ENCODE measurements at regions of chr17 and their contacts with region 1.

Region 1: DNA sequence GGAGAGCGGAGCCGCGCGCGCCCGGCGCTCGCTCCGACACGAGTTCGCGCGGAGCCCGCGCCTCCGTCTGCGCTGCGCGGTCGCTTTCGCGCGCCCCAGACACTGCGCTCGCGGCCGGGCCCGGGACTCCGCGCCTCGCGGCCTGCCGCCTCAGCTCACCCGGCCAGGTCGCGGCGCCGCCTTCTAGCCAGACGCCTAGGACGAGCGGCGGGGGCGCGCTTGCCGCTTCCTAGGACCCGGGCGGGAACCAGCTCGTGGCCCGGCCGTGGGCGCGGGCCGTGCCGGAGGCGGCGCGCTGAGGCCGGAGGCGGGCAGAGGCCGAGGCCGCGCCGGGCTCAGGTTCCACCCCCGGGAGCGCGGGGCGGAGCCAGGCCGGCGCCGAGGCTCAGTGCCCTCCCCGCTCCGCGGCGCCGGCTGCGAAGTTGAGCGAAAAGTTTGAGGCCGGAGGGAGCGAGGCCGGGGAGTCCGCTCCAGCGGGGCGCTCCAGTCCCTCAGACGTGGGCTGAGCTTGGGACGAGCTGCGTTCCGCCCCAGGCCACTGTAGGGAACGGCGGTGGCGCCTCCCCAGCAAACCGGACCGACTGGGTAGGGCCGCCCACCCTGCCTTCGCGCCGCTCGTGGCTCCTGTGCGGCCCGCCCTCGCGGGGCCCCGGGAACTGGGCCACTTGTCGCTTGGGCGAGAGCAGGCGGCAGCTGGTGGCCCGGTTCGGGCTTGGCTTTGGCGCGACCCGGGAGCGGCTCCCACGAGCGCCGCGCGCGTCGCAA is at the start of gene SPHK1:
- DNase-seq: peak; percentile 79
- ATAC-seq: peak; percentile 74
- H3K4me3 Mint-ChIP-seq: peak within 1 kb of the TSS; percentile 81
- H3K27ac Mint-ChIP-seq: peak within 1 kb of the TSS; percentile 89
- H3K4me1 Mint-ChIP-seq: peaks cover 17% of the 10 kb centered on the region
- H3K27me3 Mint-ChIP-seq: no peaks in the 10 kb centered on the region
- total RNA-seq, gene SPHK1: 5.4 to 8.4 TPM

Region 2: GRCh38 chr17:76171706-76172105 is 212.7 kb before region 1 on chr17:
- CTCF ChIA-PET with region 1: no interaction called
- DNase-seq: no peak
- ATAC-seq: no peak
- H3K4me3 Mint-ChIP-seq: no peak overlapping the region
- H3K27ac Mint-ChIP-seq: no peak overlapping the region
- H3K4me1 Mint-ChIP-seq: peaks cover 4% of the 10 kb centered on the region
- H3K27me3 Mint-ChIP-seq: no peaks in the 10 kb centered on the region

Region 3: DNA sequence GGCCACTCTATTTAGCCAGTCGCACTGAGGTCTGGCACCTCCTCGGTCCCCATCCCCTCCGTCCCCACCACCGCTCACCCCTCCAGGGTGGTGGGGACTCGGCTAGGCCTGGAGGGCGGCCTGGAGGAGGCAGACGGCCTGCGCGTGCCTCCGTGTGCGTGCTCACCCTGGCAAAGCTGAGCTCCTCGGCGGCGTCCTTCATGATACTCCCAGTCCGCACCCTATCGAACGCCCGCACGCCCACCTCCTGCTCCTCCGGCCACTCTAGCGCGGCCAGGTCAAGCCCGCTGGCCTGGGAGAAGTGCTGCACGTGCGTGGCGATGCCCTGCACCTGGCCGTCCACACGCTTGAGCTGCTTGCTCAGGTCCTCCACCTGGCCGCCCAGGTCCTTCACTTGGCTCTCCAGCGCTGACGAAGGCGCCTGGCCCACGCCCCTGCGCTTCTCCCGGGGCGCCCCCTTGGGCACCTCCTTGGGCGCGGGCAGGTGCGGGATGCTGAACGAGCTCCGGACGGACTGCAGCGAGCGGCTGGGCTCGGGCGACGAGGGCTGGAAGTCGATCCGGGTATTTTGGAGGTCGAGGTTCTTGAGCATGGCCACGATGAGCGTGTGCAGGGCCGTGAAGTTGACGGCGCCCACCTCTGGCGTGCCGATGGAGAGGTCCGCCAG is 77.0 kb before region 1 on chr17:
- CTCF ChIA-PET with region 1: interaction called, 81 read pairs
- DNase-seq: no peak
- ATAC-seq: no peak
- H3K4me3 Mint-ChIP-seq: no peak overlapping the region
- H3K27ac Mint-ChIP-seq: no peak overlapping the region
- H3K4me1 Mint-ChIP-seq: peaks cover 2% of the 10 kb centered on the region
- H3K27me3 Mint-ChIP-seq: no peaks in the 10 kb centered on the region

Region 4: DNA sequence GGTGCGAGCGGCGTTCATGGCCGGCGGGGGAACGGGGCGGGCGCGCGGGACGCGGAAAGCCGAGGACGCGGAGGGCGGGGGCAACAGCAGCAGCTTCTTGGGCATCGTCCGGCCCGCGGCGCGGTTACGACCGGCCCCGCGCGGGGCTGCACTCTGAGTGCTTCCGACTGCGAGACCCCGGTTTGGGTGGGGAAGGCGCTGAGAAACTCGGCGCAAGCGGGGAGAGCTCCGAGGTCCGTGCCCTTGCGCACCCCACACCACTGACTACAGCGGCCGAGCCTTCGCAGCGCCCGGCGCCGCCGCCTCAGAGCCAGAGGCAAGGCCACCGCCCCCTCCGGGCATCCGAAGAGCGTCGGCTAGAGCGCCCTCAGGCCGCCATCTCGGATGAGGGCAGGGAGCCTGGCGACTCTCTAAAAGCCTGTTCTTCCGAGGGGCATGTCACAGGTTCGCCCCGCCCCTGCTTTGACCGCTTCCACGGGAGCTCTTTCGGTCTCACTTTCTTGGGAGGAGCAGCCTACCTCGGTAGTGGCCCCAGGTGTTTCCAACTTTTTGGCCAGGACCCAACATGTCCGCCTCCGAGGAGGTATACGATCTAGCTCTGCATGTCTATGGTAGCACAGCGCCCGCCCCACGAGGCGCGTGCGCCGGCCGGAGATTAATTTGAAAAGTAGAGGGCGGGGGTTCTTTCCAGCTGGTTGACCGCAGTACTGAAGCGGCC is 30.6 kb before region 1 on chr17 and contains the start of gene PRPSAP1:
- CTCF ChIA-PET with region 1: interaction called, 83 read pairs
- DNase-seq: peak; percentile 90
- ATAC-seq: peak; percentile 95
- H3K4me3 Mint-ChIP-seq: peak within 1 kb of the TSS; percentile 98
- H3K27ac Mint-ChIP-seq: peak within 1 kb of the TSS; percentile 99
- H3K4me1 Mint-ChIP-seq: peaks cover 34% of the 10 kb centered on the region
- H3K27me3 Mint-ChIP-seq: no peaks in the 10 kb centered on the region
- total RNA-seq, gene PRPSAP1: 63.9 to 64.7 TPM

Region 5: DNA sequence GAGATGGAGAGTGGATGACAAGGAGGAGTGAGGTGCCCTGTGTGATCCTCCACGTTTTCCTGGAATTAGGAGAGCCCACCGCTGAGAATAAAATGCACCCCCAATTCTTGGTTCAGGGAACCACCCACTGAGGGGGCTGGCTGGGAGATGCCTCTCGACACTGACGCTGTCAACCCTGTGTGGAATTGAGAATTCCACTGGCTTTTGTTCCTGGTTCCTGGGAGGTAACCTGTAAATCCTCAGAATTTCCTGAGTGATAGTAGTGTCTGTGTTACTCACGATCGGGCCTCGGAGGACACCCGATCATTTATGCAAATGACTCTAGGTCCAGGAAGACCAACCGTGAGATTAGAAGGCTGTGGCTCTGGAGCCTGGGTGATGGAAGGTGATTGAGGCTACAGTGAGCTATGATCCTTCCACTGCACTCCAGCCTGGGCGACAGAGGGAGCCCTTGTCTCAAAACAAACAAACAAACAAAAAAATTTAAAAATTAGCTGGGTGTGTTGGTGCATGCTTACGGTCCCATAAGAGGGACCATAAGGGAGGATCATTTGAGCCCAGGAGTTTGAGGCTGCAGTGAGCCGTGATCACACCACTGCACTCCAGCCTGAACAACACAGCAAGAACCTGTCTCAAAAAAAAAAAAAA is 19.0 kb before region 1 on chr17:
- CTCF ChIA-PET with region 1: interaction called, 45 read pairs
- DNase-seq: no peak
- ATAC-seq: no peak
- H3K4me3 Mint-ChIP-seq: no peak overlapping the region
- H3K27ac Mint-ChIP-seq: no peak overlapping the region
- H3K4me1 Mint-ChIP-seq: no peaks in the 10 kb centered on the region
- H3K27me3 Mint-ChIP-seq: no peaks in the 10 kb centered on the region

Region 6: GRCh38 chr17:76370261-76370993 is 14.0 kb before region 1 on chr17:
- CTCF ChIA-PET with region 1: interaction called, 45 read pairs
- DNase-seq: no peak
- ATAC-seq: no peak
- H3K4me3 Mint-ChIP-seq: no peak overlapping the region
- H3K27ac Mint-ChIP-seq: no peak overlapping the region
- H3K4me1 Mint-ChIP-seq: no peaks in the 10 kb centered on the region
- H3K27me3 Mint-ChIP-seq: no peaks in the 10 kb centered on the region

Region 7: GRCh38 chr17:76408052-76408849 is 23.8 kb after region 1 on chr17:
- CTCF ChIA-PET with region 1: interaction called, 26 read pairs
- DNase-seq: peak; percentile 80
- ATAC-seq: peak; percentile 81
- H3K4me3 Mint-ChIP-seq: no peak overlapping the region
- H3K27ac Mint-ChIP-seq: no peak overlapping the region
- H3K4me1 Mint-ChIP-seq: peaks cover 4% of the 10 kb centered on the region
- H3K27me3 Mint-ChIP-seq: no peaks in the 10 kb centered on the region

Region 8: GRCh38 chr17:76452660-76453430 is 68.4 kb after region 1 on chr17 and contains the start of gene UBE2O:
- CTCF ChIA-PET with region 1: interaction called, 12 read pairs
- DNase-seq: peak; percentile 95
- ATAC-seq: peak; percentile 94
- H3K4me3 Mint-ChIP-seq: peak within 1 kb of the TSS; percentile 86
- H3K27ac Mint-ChIP-seq: peak within 1 kb of the TSS; percentile 54
- H3K4me1 Mint-ChIP-seq: peaks cover 34% of the 10 kb centered on the region
- H3K27me3 Mint-ChIP-seq: peaks cover 6% of the 10 kb centered on the region
- total RNA-seq, gene UBE2O: 30.2 to 34.7 TPM

Region 9: GRCh38 chr17:76585818-76586593 is 201.6 kb after region 1 on chr17 and contains the start of gene ST6GALNAC2:
- CTCF ChIA-PET with region 1: no interaction called
- DNase-seq: peak; percentile 51
- ATAC-seq: peak; percentile 80
- H3K4me3 Mint-ChIP-seq: peak within 1 kb of the TSS; percentile 38
- H3K27ac Mint-ChIP-seq: no peak within 1 kb of the TSS
- H3K4me1 Mint-ChIP-seq: peaks cover 6% of the 10 kb centered on the region
- H3K27me3 Mint-ChIP-seq: peaks cover 61% of the 10 kb centered on the region
- total RNA-seq, gene ST6GALNAC2: not detected